GM12878 (cell line): ENCODE measurements at regions of chr1 and their contacts with region 1.

Region 1: GRCh38 chr1:160664573-160665051 is 17.8 kb upstream of the SLAMF1 start:
- DNase-seq: peak; percentile 73
- ATAC-seq: peak; percentile 90
- H3K4me3 ChIP-seq: peak overlapping the region; percentile 48; the same call in 1 of the 2 replicates
- H3K27ac ChIP-seq: peak overlapping the region; percentile 75
- H3K4me1 ChIP-seq: peaks cover 42% of the 10 kb centered on the region
- H3K27me3 ChIP-seq: no peaks in the 10 kb centered on the region
- CTCF ChIP-seq: no peak
- EP300 ChIP-seq: peak; percentile 29 to 41; a peak in 1 of 4 replicates
- POLR2A ChIP-seq: no peak
- RAD21 ChIP-seq: no peak

Region 2: DNA sequence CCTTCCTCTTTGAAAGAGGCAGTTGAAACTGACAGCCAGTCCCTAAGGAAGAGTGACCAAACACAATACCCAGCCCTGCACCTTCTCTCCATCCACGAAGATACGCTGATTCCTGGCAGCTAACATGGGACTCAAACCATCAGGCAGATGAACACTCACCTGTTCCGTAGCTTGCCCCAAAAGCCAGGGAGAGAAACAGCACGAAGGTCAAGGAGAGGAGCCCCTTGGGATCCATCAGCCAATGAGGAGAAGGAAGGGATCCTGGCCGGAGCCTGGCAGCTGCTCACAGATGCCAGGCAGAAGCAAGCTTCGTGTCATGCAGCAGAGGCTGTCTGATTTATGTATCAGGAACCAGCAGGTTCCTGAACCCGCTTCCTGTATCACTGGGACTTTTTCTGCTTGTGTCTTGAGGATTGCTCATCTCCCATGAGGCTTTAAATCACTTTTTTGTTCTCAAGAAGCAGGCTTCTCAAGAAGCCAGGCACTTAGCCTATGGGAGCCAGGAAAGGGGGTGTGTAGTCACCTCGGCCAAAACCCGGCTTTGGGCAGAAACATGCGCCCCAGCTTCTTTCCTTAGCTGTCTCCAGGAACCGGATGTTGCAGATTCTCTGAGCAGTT is 17.8 kb before region 1 on chr1 and contains the start of gene SLAMF1:
- CTCF ChIA-PET with region 1: interaction called, 7 read pairs
- POLR2A ChIA-PET with region 1: interaction called, 9 read pairs
- RAD21 ChIA-PET with region 1: interaction called, 10 read pairs
- SMC1A ChIA-PET with region 1: interaction called, 79 read pairs
- in situ Hi-C with region 1: no loop called
- intact Hi-C with region 1: loop called (anchors 1 kb)
- DNase-seq: peak; percentile 95
- ATAC-seq: peak; percentile 63
- H3K4me3 ChIP-seq: peak within 1 kb of the TSS; percentile 95
- H3K27ac ChIP-seq: peak within 1 kb of the TSS; percentile 95
- H3K4me1 ChIP-seq: peaks cover 19% of the 10 kb centered on the region
- H3K27me3 ChIP-seq: no peaks in the 10 kb centered on the region
- CTCF ChIP-seq: no peak
- EP300 ChIP-seq: peak; percentile 5 to 19; a peak in 1 of 4 replicates
- POLR2A ChIP-seq: peak; percentile 82
- RAD21 ChIP-seq: no peak
- polyA plus RNA-seq, gene SLAMF1: 128 to 145 TPM

Region 3: GRCh38 chr1:160653620-160654016 is 11.0 kb before region 1 on chr1:
- CTCF ChIA-PET with region 1: interaction called, 7 read pairs
- POLR2A ChIA-PET with region 1: interaction called, 9 read pairs
- RAD21 ChIA-PET with region 1: interaction called, 10 read pairs
- SMC1A ChIA-PET with region 1: interaction called, 79 read pairs
- in situ Hi-C with region 1: no loop called
- intact Hi-C with region 1: no loop called
- DNase-seq: no peak
- ATAC-seq: peak; percentile 71
- H3K4me3 ChIP-seq: peak overlapping the region; percentile 37; the same call in 1 of the 2 replicates
- H3K27ac ChIP-seq: peak overlapping the region; percentile 75
- H3K4me1 ChIP-seq: peaks cover 66% of the 10 kb centered on the region
- H3K27me3 ChIP-seq: no peaks in the 10 kb centered on the region
- CTCF ChIP-seq: no peak
- EP300 ChIP-seq: no peak
- POLR2A ChIP-seq: no peak
- RAD21 ChIP-seq: no peak